Activated CD8-positive, alpha-beta T cell treated with anti-CD3 and anti-CD28 coated beads for 36 hours (primary cell): ENCODE measurements at regions of chr18 and their contacts with region 1.

Region 1: DNA sequence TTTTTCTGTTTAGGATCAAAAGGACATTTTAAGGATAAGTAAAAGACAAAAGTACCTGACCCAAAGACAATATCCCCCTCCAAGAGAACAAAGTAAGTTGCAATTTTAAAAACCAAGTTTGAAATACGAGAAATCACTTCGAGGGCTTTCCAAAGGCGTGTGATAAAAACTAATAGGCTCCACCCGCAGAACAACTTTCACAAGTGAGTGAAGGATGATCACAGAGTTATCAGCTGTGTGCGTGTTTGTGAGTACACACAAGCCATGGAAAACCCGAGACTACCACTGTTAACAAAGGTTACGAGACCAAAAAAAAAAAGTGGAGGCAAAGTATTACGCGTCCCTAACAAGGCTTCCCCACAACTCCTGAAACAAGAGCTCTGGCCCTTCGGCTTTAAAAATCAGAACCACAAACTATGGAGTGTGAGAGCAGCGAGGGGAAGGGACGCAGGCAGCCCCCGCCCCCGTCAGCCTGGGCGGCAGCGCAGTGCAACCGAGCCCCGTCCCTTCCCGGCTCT is 719 bp downstream of the SMAD2 start:
- DNase-seq: no peak
- ATAC-seq: peak; percentile 3
- H3K4me3 Mint-ChIP-seq: peak overlapping the region; percentile 95
- H3K27ac Mint-ChIP-seq: peak overlapping the region; percentile 96
- H3K4me1 Mint-ChIP-seq: peaks cover 48% of the 10 kb centered on the region
- H3K27me3 Mint-ChIP-seq: no peaks in the 10 kb centered on the region
- CTCF ChIP-seq: no peak

Region 2: DNA sequence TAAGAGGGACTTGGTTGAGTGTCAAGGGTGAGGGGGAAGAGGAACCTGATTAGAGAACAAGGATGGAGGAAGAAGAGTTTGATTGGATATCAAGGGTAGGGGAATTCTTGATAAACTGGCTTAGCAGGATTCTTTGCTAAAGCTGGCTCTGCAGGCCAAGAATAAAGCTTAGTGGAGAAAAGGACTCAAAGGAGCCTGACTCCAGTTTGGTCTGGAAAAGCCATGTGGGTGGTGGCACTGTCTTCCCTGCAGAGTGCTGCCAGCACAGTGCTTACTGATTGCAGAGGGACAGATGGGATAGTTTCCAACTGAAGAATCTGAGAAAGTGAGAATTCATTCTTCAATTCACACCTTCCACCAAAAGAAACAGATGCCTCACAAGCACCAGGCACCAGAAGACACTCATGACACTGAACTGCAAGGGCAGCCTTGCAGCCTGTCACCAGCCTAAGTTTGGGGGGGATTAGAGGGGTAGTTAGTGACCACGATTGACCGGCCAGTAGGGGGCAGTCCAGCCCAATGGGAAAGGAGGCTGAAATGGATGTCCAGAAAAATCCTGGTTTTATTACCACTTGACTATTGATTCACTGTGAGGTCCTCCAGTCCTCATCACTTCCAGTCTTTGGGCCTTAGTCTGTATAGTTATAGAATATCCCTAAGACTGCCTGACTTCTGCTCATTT is 333.8 kb before region 1 on chr18:
- CTCF ChIA-PET with region 1: no interaction called
- POLR2A ChIA-PET with region 1: no interaction called
- intact Hi-C with region 1: no loop called
- DNase-seq: peak; percentile 42
- ATAC-seq: no peak
- H3K4me3 Mint-ChIP-seq: no peak overlapping the region
- H3K27ac Mint-ChIP-seq: no peak overlapping the region
- H3K4me1 Mint-ChIP-seq: no peaks in the 10 kb centered on the region
- H3K27me3 Mint-ChIP-seq: peaks cover 24% of the 10 kb centered on the region
- CTCF ChIP-seq: peak; percentile 59

Region 3: DNA sequence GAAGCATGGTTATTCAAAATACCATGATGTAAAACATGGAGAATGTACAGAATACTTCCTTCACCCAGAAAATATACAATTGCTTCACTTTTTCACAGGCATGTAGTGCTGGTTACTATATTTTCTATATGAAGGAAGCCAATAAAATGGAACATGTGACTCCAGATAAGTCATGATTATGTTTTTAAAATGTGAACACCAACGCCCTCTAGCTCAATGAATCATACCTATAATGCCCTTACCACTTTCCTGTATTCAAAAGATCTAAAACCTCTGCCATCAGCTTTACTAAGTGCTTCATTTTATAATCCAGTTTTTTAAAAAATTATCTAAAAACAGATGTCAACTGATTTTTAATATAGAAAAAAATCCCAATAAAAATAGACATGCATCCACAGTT is 59.1 kb before region 1 on chr18:
- CTCF ChIA-PET with region 1: interaction called, 5 read pairs
- POLR2A ChIA-PET with region 1: no interaction called
- intact Hi-C with region 1: loop called (anchors 10 kb)
- DNase-seq: no peak
- ATAC-seq: peak; percentile 55
- H3K4me3 Mint-ChIP-seq: no peak overlapping the region
- H3K27ac Mint-ChIP-seq: peak overlapping the region; percentile 57
- H3K4me1 Mint-ChIP-seq: peaks cover 44% of the 10 kb centered on the region
- H3K27me3 Mint-ChIP-seq: no peaks in the 10 kb centered on the region
- CTCF ChIP-seq: no peak

Region 4: GRCh38 chr18:47912343-47912742 is 17.4 kb before region 1 on chr18:
- CTCF ChIA-PET with region 1: interaction called, 13 read pairs
- POLR2A ChIA-PET with region 1: interaction called, 12 read pairs
- intact Hi-C with region 1: loop called (anchors 2 kb)
- DNase-seq: peak; percentile 26
- ATAC-seq: peak; percentile 68
- H3K4me3 Mint-ChIP-seq: peak overlapping the region; percentile 18
- H3K27ac Mint-ChIP-seq: peak overlapping the region; percentile 90
- H3K4me1 Mint-ChIP-seq: peaks cover 89% of the 10 kb centered on the region
- H3K27me3 Mint-ChIP-seq: no peaks in the 10 kb centered on the region
- CTCF ChIP-seq: no peak